Panc1 (cell line): ENCODE measurements at regions of chr2 and their contacts with region 1.

Region 1: GRCh38 chr2:9555297-9556141 is at the start of gene ADAM17:
- DNase-seq: no peak
- ATAC-seq: peak; percentile 90
- H3K4me3 ChIP-seq: peak within 1 kb of the TSS; percentile 92 to 94
- H3K27ac ChIP-seq: peak within 1 kb of the TSS; percentile 99
- H3K4me1 ChIP-seq: peaks cover 41% of the 10 kb centered on the region
- H3K27me3 ChIP-seq: no peaks in the 10 kb centered on the region
- CTCF ChIP-seq: peak; percentile 79
- total RNA-seq, gene ADAM17: 50.0 TPM

Region 2: DNA sequence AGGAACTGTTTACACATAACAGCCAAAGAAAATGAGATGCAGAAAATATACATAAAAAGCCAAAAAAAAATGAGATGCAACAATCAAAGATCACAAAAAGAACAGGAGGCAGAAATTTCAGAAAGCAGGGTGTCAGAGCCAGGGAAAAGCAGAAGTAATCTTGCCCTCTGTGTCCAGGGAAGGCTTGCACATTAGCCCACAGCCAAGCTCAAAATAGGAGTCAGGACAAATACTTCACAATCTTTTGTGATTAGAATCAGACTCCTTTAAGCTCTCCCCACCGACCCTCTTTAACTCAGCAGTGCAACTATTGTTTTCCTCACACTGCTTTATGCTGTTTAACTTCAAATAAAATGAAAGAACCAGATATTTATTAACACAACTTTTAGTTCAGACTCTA is 46.6 kb before region 1 on chr2:
- CTCF ChIA-PET with region 1: no interaction called
- POLR2A ChIA-PET with region 1: interaction called, 18 read pairs
- in situ Hi-C with region 1: no loop called
- intact Hi-C with region 1: no loop called
- DNase-seq: no peak
- ATAC-seq: no peak
- H3K4me3 ChIP-seq: no peak overlapping the region
- H3K27ac ChIP-seq: no peak overlapping the region
- H3K4me1 ChIP-seq: no peaks in the 10 kb centered on the region
- H3K27me3 ChIP-seq: no peaks in the 10 kb centered on the region
- CTCF ChIP-seq: no peak

Region 3: GRCh38 chr2:9519250-9519649 is 36.3 kb before region 1 on chr2:
- CTCF ChIA-PET with region 1: no interaction called
- POLR2A ChIA-PET with region 1: no interaction called
- in situ Hi-C with region 1: no loop called
- intact Hi-C with region 1: loop called (anchors 1 kb)
- DNase-seq: no peak
- ATAC-seq: no peak
- H3K4me3 ChIP-seq: no peak overlapping the region
- H3K27ac ChIP-seq: no peak overlapping the region
- H3K4me1 ChIP-seq: no peaks in the 10 kb centered on the region
- H3K27me3 ChIP-seq: no peaks in the 10 kb centered on the region
- CTCF ChIP-seq: no peak

Region 4: GRCh38 chr2:9543557-9543956 is 12.0 kb before region 1 on chr2:
- CTCF ChIA-PET with region 1: no interaction called
- POLR2A ChIA-PET with region 1: no interaction called
- in situ Hi-C with region 1: no loop called
- intact Hi-C with region 1: no loop called
- DNase-seq: no peak
- ATAC-seq: no peak
- H3K4me3 ChIP-seq: no peak overlapping the region
- H3K27ac ChIP-seq: no peak overlapping the region
- H3K4me1 ChIP-seq: peaks cover 6% of the 10 kb centered on the region; the same call in 1 of the 2 replicates
- H3K27me3 ChIP-seq: no peaks in the 10 kb centered on the region
- CTCF ChIP-seq: no peak

Region 5: DNA sequence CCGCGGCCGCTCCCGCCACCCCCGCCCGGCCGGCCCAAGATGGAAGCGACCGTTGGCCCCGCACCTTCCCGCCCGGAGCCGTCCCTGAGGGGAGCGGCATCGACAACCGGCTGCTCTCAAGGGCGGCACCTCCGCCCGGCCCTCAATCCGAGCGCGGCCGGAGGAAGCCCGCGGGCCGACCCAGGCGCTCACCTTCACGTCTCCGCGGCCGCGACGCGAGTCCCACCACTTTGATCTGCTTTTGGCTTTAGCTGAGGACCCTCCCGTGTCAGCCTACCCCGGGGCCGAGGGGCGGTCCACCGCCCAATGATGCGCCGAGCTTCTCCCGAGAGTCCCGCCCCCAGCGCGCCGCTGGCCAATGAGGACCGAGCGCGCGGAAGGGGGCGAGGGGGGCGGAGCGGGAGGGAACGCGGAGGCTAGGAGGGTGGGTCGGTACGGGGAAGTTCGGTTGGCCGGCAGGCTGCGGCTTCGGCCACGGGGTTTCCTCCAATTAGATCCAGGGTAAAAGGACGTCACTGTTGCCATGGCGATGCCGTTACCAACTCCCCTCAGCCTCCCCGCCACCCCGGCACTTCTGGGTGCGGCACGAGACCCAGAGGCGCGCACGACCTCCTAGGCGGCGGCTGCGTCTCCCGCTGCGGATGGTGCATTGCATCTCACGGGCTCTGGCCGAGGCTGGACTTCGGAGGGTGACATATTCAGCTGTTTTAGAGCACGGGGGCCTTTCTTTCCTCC is 75.4 kb after region 1 on chr2 and contains the start of gene YWHAQ:
- CTCF ChIA-PET with region 1: no interaction called
- POLR2A ChIA-PET with region 1: interaction called, 4 read pairs
- in situ Hi-C with region 1: no loop called
- intact Hi-C with region 1: loop called (anchors 5 kb)
- DNase-seq: peak; percentile 94
- ATAC-seq: peak; percentile 92
- H3K4me3 ChIP-seq: peak within 1 kb of the TSS; percentile 65 to 91
- H3K27ac ChIP-seq: peak within 1 kb of the TSS; percentile 93
- H3K4me1 ChIP-seq: peaks cover 65% of the 10 kb centered on the region
- H3K27me3 ChIP-seq: no peaks in the 10 kb centered on the region
- CTCF ChIP-seq: no peak
- total RNA-seq, gene YWHAQ: 683 TPM